Activated B cell treated with CpG ODN at 0.5 μM for 24 hours (primary cell): ENCODE measurements at regions of chr1 and their contacts with region 1.

Region 1: GRCh38 chr1:226642876-226643576 is 94.5 kb downstream of the STUM start:
- DNase-seq: peak; percentile 52
- ATAC-seq: peak; percentile 63
- H3K4me3 Mint-ChIP-seq: peak overlapping the region; percentile 67
- H3K27ac Mint-ChIP-seq: peak overlapping the region; percentile 88
- H3K4me1 Mint-ChIP-seq: peaks cover 76% of the 10 kb centered on the region
- H3K27me3 Mint-ChIP-seq: no peaks in the 10 kb centered on the region
- CTCF ChIP-seq: no peak

Region 2: DNA sequence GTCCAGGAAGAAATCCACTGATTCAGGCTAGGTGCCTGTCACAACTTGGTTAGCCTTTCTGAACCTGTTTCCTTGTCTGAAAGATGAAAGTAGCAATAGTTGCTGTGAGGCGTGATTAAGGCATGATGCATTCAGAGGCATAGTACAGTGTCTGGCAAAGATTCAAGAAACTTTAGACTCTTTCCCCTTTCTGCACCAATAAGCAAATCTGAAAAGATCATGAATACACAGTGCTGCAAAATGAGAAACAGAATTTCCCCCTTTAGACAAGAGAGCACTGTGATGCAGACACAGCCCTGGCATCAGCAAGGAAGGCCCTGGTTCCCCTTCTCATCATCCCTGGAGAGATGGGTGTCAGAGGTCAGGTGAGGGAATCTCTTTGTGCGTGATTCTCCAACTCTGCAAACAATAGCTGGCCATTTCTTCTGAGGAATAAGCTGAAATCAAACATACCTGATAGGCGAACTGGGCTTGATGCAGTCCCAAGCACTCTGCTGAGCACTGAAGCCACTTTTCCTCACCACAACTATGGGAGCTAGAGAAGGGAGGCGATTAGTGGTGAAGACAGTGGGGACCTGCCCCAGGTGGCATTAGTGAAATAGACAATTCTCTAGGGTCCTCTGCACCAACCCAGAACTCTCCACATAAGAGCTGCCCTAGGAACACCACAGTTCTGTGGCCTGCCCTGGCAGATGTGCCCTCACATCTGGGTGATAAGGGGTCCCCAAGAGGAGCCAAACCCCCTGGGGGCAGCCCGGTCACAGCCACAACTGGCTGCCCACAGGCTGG is 54.3 kb after region 1 on chr1:
- CTCF ChIA-PET with region 1: interaction called, 5 read pairs
- POLR2A ChIA-PET with region 1: interaction called, 86 read pairs
- intact Hi-C with region 1: loop called (anchors 1 kb)
- DNase-seq: peak; percentile 54
- ATAC-seq: peak; percentile 82
- H3K4me3 Mint-ChIP-seq: peak overlapping the region; percentile 77
- H3K27ac Mint-ChIP-seq: peak overlapping the region; percentile 96
- H3K4me1 Mint-ChIP-seq: peaks cover 94% of the 10 kb centered on the region
- H3K27me3 Mint-ChIP-seq: no peaks in the 10 kb centered on the region
- CTCF ChIP-seq: no peak

Region 3: DNA sequence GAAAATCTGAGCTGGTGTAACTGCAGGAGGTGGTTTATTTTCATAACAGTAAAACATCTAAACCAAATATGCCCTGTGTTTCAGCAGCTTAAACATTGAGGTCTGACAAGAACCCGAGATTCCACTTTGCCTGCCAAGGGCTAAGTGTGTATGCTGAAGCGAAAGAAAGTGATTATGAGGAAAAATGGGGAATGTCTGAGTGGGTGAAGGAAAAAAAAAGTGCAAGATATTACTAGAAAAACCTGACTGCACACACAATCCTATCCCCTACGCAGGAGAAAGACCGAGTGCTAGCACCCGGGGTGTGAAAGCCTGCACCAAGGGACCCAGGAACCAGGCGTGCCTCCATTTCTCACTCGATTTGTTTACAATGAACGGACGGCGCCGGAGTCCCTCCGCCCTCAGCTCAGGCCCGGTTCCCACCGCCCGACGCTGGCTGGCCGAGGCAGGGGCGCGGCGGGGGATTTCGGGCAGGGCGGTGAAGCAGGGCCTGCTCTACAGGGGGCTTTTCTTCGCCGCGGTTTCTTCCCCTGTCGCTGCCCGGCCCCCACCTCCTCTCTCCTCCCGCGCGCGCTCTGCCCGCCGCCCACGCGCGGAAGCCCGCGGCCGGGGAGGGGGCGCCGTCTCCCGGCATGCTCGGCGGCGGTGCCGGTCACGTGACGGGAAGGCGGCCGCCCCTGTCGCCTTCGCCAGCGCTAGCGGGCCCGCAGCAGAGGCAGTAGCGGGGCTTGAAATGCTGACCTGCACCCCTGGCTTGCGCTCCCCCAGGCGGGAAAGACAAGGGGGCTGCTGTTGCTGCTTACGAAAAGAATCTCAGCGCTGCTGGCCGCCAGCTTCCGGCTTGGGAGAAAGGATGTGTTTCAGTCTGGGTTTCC is 60.2 kb after region 1 on chr1:
- CTCF ChIA-PET with region 1: interaction called, 4 read pairs
- POLR2A ChIA-PET with region 1: interaction called, 86 read pairs
- intact Hi-C with region 1: loop called (anchors 1 kb)
- DNase-seq: peak; percentile 90
- ATAC-seq: peak; percentile 90
- H3K4me3 Mint-ChIP-seq: peak overlapping the region; percentile 76
- H3K27ac Mint-ChIP-seq: peak overlapping the region; percentile 93
- H3K4me1 Mint-ChIP-seq: peaks cover 78% of the 10 kb centered on the region
- H3K27me3 Mint-ChIP-seq: no peaks in the 10 kb centered on the region
- CTCF ChIP-seq: no peak

Region 4: DNA sequence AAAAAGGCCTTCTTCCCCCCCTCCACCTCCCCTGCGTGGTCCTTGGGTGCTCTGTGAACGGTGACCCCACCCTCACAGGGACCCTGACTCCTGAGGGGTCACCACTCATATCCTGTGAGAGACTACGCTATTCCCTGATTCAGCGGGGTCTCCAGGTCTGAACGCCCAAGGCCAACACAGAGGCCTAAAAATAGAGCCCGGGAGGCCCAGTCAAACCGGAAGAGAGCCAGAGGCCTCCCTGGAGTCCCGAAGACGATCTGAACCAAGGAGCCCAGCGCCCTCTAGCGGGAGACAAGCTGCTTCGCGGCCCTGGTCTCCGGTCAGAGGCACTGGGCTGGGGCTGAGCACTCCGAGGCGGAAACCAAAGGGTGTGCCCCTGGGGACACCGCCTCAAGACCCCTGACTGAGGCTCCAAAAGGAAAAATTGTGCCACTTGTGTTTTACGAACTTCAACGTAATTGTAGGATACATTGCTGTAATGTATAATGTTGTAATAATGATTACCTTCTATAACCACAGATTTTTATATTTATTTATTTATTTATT is 185.0 kb after region 1 on chr1:
- CTCF ChIA-PET with region 1: interaction called, 91 read pairs
- POLR2A ChIA-PET with region 1: interaction called, 4 read pairs
- intact Hi-C with region 1: loop called (anchors 2 kb)
- DNase-seq: peak; percentile 82
- ATAC-seq: peak; percentile 97
- H3K4me3 Mint-ChIP-seq: peak overlapping the region; percentile 58
- H3K27ac Mint-ChIP-seq: peak overlapping the region; percentile 80
- H3K4me1 Mint-ChIP-seq: peaks cover 37% of the 10 kb centered on the region
- H3K27me3 Mint-ChIP-seq: no peaks in the 10 kb centered on the region
- CTCF ChIP-seq: peak; percentile 67